ENCODE measurements at regions of chr15 and their contacts with region 1.

Region 1: GRCh38 chr15:33448961-33449606 is 138.3 kb downstream of the RYR3 start:
- H3K4me3 Mint-ChIP-seq: no peak overlapping the region
- H3K27ac Mint-ChIP-seq: no peak overlapping the region
- H3K4me1 Mint-ChIP-seq: no peaks in the 10 kb centered on the region
- H3K27me3 Mint-ChIP-seq: peaks cover 29% of the 10 kb centered on the region

Region 2: GRCh38 chr15:33292717-33293307 is 156.3 kb before region 1 on chr15:
- intact Hi-C with region 1: loop called (anchors 10 kb)
- H3K4me3 Mint-ChIP-seq: no peak overlapping the region
- H3K27ac Mint-ChIP-seq: no peak overlapping the region
- H3K4me1 Mint-ChIP-seq: no peaks in the 10 kb centered on the region
- H3K27me3 Mint-ChIP-seq: peaks cover 2% of the 10 kb centered on the region

Region 3: GRCh38 chr15:33341953-33342352 is 107.1 kb before region 1 on chr15:
- intact Hi-C with region 1: no loop called
- H3K4me3 Mint-ChIP-seq: no peak overlapping the region
- H3K27ac Mint-ChIP-seq: no peak overlapping the region
- H3K4me1 Mint-ChIP-seq: no peaks in the 10 kb centered on the region
- H3K27me3 Mint-ChIP-seq: no peaks in the 10 kb centered on the region

Measured in dendritic cell treated with granulocyte-macrophage colony-stimulating factor and Interleukin-4, amounts not matched to agents 40 ng/mL and 50 ng/mL, for 4 days (primary cell).